Caco-2 (cell line): ENCODE measurements at regions of chr14 and their contacts with region 1.

Region 1: DNA sequence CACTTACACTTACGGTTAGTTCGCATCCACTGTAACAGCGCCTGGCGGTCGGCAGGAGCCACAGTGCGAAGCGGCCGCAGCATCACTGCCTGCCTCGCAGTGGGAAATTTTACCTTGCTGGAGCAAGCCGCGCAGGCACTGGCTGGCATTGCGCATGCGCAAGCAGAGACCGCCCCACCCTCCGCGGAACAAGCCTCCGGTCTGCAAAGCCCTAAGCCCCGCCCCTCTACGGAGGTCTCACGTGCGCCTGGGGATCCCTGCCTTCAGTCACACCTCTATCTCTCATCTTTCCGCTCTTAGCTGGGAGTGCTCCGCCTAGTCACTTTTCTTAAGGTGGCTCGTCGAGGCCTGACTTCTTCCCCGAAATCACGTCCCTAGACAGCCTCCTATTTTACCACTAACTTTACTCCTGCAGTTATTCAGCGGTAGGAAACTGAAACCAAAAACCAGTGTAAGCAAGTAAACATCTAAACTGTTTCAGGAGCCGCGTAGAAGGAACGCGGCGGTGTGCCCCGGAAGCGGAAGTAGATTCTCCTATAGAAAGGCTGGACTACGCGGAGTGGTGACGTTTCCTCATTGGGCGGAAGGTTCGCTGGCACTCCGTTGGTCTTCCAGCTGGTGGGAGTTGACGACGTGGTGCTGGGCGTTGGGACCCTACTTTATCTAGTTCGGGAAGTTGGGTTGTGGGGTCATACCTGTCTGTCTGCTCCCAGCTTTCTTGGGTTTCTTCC is at the start of gene SRP54:
- DNase-seq: peak; percentile 99 to 100
- H3K4me3 ChIP-seq: peak within 1 kb of the TSS; percentile 58
- H3K4me3 Mint-ChIP-seq: no peak within 1 kb of the TSS
- H3K27ac Mint-ChIP-seq: no peak within 1 kb of the TSS
- H3K4me1 ChIP-seq: no peaks in the 10 kb centered on the region; the same call in 1 of the 2 replicates
- H3K4me1 Mint-ChIP-seq: no peaks in the 10 kb centered on the region
- H3K27me3 ChIP-seq: no peaks in the 10 kb centered on the region
- H3K27me3 Mint-ChIP-seq: no peaks in the 10 kb centered on the region
- CTCF ChIP-seq: no peak
- total RNA-seq, gene SRP54: 80.0 and 84.5 TPM in 2 replicates

Region 2: GRCh38 chr14:34956931-34957330 is 25.7 kb before region 1 on chr14:
- CTCF ChIA-PET with region 1: interaction called, 6 read pairs
- POLR2A ChIA-PET with region 1: interaction called, 13 read pairs
- intact Hi-C with region 1: loop called (anchors 1 kb)
- DNase-seq: no peak
- H3K4me3 ChIP-seq: no peak overlapping the region
- H3K4me3 Mint-ChIP-seq: no peak overlapping the region
- H3K27ac Mint-ChIP-seq: no peak overlapping the region
- H3K4me1 ChIP-seq: peaks cover 19% of the 10 kb centered on the region
- H3K4me1 Mint-ChIP-seq: peaks cover 16% of the 10 kb centered on the region
- H3K27me3 ChIP-seq: no peaks in the 10 kb centered on the region
- H3K27me3 Mint-ChIP-seq: no peaks in the 10 kb centered on the region
- CTCF ChIP-seq: no peak

Region 3: GRCh38 chr14:35046048-35046741 is 63.6 kb after region 1 on chr14 and contains the start of gene FAM177A1:
- CTCF ChIA-PET with region 1: interaction called, 5 read pairs
- POLR2A ChIA-PET with region 1: interaction called, 35 read pairs
- intact Hi-C with region 1: loop called (anchors 1 kb)
- DNase-seq: peak; percentile 97 to 99
- H3K4me3 ChIP-seq: peak within 1 kb of the TSS; percentile 93
- H3K4me3 Mint-ChIP-seq: peak within 1 kb of the TSS; percentile 90
- H3K27ac Mint-ChIP-seq: peak within 1 kb of the TSS; percentile 98
- H3K4me1 ChIP-seq: peaks cover 21% of the 10 kb centered on the region
- H3K4me1 Mint-ChIP-seq: peaks cover 17% of the 10 kb centered on the region
- H3K27me3 ChIP-seq: no peaks in the 10 kb centered on the region
- H3K27me3 Mint-ChIP-seq: no peaks in the 10 kb centered on the region
- CTCF ChIP-seq: no peak
- total RNA-seq, gene FAM177A1: 73.6 and 82.0 TPM in 2 replicates

Region 4: DNA sequence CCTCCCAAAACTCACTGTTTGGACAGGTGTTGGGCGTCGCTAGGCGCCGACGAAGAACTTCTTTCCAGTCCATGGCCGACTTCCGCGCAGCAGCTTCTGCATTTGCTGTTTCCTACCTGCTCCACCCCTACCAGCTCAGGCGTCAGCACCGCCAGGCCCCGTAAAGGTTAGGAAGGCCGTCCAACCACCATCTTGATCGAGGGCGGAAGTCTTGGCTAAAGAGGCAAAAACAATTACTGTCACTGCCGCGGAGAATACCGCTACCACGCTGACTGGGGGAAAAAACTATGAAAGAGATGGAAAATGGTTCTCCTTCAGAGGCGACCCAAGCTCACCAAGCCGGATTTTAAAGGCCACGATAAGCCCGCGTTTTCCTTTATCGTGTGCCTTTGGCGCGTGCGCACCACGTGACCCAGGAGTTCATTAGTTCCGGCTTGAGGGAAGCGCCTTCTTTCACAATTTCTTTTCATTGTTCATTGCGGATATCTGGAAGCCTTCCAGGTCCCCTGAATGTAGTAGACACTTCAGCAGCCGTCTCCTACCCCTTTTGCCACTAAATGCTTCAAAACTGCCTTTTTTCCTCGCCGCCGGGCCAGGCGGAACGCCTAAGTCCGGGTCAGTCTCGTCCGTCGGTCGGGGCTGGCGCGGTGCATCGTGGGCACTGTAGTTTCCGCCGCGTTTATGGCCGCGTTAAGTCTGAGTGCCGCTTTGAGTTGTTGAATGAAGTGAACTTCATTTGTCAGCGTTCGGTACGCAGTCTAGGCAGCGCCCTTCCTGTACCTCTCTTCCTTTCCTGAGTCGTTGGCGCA is 139.5 kb after region 1 on chr14 and contains the starts of genes PPP2R3C and PRORP:
- CTCF ChIA-PET with region 1: no interaction called
- POLR2A ChIA-PET with region 1: interaction called, 8 read pairs
- intact Hi-C with region 1: loop called (anchors 1 kb)
- DNase-seq: peak; percentile 95 to 97
- H3K4me3 ChIP-seq: peak within 1 kb of the TSS; percentile 70
- H3K4me3 Mint-ChIP-seq: peak within 1 kb of the TSS; percentile 88
- H3K27ac Mint-ChIP-seq: peak within 1 kb of the TSS; percentile 100
- H3K4me1 ChIP-seq: no peaks in the 10 kb centered on the region
- H3K4me1 Mint-ChIP-seq: peaks cover 38% of the 10 kb centered on the region
- H3K27me3 ChIP-seq: no peaks in the 10 kb centered on the region
- H3K27me3 Mint-ChIP-seq: no peaks in the 10 kb centered on the region
- CTCF ChIP-seq: no peak
- total RNA-seq, gene PPP2R3C: 23.3 and 25.2 TPM in 2 replicates
- total RNA-seq, gene PRORP: 34.5 and 36.3 TPM in 2 replicates

Region 5: GRCh38 chr14:35159742-35160409 is 177.3 kb after region 1 on chr14:
- CTCF ChIA-PET with region 1: no interaction called
- POLR2A ChIA-PET with region 1: no interaction called
- intact Hi-C with region 1: no loop called
- DNase-seq: peak in 1 of 2 experiments; percentile 21
- H3K4me3 ChIP-seq: no peak overlapping the region
- H3K4me3 Mint-ChIP-seq: peak overlapping the region; percentile 53
- H3K27ac Mint-ChIP-seq: peak overlapping the region; percentile 83
- H3K4me1 ChIP-seq: peaks cover 33% of the 10 kb centered on the region
- H3K4me1 Mint-ChIP-seq: peaks cover 25% of the 10 kb centered on the region
- H3K27me3 ChIP-seq: no peaks in the 10 kb centered on the region
- H3K27me3 Mint-ChIP-seq: no peaks in the 10 kb centered on the region
- CTCF ChIP-seq: no peak